Tibial artery (tissue), 4 donors: ENCODE measurements at regions of chr16 and their contacts with region 1.

Region 1: DNA sequence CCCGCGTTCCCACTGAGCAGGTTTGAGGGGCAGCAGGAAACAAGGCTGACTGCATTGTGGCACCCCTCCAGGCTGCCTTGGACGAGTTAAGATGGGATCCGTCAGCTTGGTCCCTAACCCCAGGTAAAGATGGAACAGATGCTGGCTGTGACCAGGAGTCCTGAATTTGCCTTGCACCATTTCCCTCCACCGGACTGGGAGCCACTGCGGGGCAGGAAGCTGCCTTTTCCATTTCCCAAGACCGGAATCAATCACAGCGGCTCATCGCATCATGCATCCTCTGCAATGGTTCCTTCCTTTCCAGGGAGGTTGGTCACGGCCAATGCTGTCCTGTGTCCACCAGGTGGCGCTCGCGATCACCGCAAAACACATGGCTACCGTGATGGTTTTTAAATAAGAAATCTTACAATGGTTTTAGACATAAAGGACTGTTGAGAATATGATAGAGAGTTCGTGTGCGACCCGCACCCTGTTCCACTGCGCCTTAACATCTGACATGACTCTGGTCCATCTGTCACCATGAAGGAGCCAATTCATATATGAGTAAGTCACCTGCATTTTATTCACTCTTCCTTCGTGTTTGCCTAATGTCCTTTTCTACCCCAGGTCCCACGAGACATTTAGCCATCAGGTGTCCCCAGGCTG is 6.8 kb upstream of the MEAK7 start:
- DNase-seq: peak; percentile 83 to 89
- H3K4me3 ChIP-seq: no peak overlapping the region
- H3K27ac ChIP-seq: no peak overlapping the region
- H3K4me1 ChIP-seq: peaks cover 0 to 4% (median 2%) of the 10 kb centered on the region in 4 donors
- H3K27me3 ChIP-seq: no peaks in the 10 kb centered on the region
- CTCF ChIP-seq: peak; percentile 93 to 96

Region 2: DNA sequence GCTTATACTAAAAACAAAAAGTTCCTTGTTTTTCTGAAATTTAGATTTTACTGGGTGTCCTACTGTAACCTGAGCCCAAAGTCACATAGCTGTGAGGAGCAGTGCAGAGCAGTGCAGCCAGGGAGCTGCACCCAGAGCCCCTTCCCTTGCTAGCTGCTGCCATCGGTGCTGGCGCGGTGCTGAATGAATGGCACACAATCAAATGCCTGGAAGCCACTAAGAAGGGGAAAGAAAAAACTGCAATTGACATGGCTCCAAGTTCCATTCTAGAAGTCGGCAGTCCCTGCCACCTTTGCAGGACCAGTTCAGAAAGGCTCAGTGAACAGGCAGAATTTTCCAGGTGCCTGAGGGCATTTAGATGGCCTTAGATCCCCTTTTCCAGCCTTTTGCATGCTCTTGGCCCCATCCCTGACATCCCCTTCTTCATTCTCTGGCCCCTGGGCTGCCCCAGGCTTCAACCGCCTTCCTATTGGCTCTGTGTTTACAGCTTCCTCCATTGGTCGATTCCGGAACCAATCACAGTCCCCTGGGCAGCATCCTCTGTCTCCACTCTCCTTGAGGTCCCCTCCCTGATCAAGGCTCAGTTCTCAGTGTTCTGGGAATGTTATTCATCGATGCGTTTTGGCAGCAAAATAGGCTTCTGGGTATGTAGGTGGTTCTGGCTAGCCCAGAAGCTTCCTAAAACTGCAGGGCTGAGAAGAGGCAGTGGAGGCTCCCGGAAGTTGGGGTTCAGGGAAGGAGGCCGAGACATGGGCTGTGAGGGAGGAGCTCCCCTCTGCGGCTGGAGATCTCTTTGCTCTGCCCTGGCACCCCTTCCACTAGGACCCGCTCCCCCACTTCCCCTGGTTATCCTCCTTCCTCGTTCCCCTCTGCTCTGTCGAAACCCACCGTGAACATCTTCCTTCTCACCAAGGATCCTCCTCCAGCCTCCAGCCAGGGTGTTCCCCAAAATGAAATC is 105.0 kb before region 1 on chr16:
- intact Hi-C with region 1: no loop called
- DNase-seq: no peak
- H3K4me3 ChIP-seq: no peak overlapping the region
- H3K27ac ChIP-seq: no peak overlapping the region
- H3K4me1 ChIP-seq: no peaks in the 10 kb centered on the region
- H3K27me3 ChIP-seq: peaks cover 0 to 17% of the 10 kb centered on the region in 2 donors
- CTCF ChIP-seq: no peak

Region 3: DNA sequence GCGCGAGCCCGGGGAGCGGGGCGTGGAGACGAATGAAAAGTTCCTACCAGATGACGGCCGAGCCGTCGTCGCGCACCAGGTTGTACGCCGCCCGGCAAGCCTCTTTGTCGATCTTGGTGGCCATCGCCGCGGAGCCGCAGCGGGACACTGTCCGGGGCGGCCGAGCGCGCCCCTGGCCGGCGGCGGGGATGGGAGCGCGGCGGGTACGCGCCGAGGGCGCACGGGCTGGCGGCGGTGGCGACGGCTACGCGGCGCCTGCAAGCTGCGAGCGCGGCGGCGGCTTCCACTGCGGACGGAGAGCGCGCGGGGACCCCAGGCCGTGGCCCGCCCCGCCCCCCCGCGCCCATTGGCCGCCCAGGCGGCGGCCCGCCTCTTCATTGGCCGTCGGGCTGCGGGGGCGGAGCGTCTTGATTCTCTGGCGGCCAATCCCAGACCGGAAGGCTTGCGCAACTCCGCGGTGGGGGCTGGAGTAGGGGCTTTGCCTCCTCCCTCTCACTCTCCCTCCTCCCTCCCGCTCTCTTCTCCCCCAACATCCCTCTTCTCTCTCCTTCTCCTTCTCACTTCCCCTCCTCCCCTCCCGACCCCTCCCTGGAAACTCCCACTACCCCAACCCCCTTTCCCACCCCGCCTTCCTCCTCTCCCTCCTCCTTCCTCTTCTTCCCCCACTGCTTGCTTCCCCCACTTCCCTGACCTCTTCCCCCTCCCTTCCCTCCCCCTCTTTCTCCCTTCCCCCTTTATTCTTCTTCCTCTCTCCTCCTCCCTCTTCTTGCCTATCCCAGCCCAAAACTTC is 106.7 kb after region 1 on chr16 and contains the start of gene COTL1:
- intact Hi-C with region 1: loop called (anchors 2 kb)
- DNase-seq: peak; percentile 97 to 98
- H3K4me3 ChIP-seq: peak within 1 kb of the TSS; percentile 59 to 80
- H3K27ac ChIP-seq: peak within 1 kb of the TSS; percentile 65 to 69
- H3K4me1 ChIP-seq: peaks cover 4 to 28% (median 23%) of the 10 kb centered on the region in 4 donors
- H3K27me3 ChIP-seq: no peaks in the 10 kb centered on the region
- CTCF ChIP-seq: no peak

Region 4: DNA sequence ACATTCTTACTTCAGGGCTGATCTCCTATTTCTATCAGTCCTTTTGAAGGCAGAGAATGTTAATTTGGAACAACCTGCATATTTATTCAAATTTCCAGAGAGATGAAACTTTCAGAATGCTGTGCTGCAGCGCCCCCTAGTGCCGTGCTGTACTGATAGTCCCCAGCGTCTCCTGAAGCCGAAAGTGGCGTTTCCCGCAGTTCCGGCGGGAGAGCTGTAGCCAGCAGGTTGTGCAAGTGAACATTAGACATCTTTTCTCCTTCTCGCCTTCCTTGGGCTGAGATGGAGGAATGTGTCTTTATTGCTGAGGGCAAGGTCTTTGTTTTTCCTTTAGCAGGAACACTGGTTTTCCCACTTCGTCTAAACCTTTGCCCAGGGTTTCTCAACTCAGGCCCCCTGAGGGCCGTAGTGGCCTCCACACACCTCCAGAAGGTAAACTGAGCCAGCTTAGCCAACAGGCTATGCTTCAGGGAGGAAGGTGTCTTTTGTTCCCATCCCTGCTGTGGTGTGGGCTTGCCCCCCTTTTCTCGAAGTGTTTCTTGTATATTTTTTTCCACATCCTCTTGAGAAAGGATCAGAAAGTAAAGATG is 214.9 kb after region 1 on chr16:
- intact Hi-C with region 1: loop called (anchors 5 kb)
- DNase-seq: peak; percentile 92 to 93
- H3K4me3 ChIP-seq: no peak overlapping the region
- H3K27ac ChIP-seq: peak overlapping the region in 1 of 2 donors; percentile 26
- H3K4me1 ChIP-seq: peaks cover 0 to 49% (median 25%) of the 10 kb centered on the region in 4 donors
- H3K27me3 ChIP-seq: no peaks in the 10 kb centered on the region
- CTCF ChIP-seq: peak; percentile 90 to 94

Region 5: DNA sequence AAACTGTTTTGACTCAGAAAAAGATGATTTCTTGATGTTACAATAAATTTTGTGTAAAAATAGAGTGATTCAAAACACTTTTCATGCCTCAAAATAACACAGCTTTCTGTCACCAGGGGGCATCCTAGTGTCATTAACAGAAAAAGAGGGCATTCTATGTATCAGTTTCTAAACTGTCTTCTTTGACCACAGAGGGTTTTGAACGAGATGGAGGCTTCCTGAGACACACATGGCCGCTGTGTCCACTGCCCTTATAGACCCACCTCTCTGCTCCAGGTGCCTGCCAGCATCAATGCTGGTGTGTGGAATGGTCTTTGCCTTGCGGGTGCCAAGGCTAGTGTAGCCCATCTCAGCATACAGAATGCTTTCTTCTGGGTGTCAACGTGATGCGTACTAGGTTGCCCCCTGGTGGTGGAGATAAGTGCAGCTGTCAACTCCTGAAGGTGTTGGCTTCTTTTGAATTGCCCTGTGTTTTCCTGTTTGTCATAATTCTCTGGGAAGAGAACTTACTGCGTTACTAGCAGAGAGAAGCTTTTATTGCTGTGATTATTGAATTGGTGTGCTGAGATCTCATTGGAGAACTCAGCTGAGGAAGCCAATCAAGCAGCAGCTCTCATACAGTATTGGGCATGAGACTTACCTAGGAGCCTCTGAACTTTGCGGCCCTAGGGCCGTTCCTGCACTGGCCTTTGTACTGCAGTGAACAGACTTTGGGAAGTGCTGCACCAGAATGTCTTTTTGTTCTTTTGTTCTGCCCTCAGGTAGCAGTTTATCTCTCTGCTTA is 227.1 kb after region 1 on chr16:
- intact Hi-C with region 1: loop called (anchors 5 kb)
- DNase-seq: peak; percentile 77 to 81
- H3K4me3 ChIP-seq: no peak overlapping the region
- H3K27ac ChIP-seq: no peak overlapping the region
- H3K4me1 ChIP-seq: peaks cover 0 to 39% (median 13%) of the 10 kb centered on the region in 4 donors
- H3K27me3 ChIP-seq: no peaks in the 10 kb centered on the region
- CTCF ChIP-seq: peak; percentile 83 to 87